Activated CD4-positive, alpha-beta memory T cell treated with anti-CD3 and anti-CD28 coated beads for 36 hours (primary cell): ENCODE measurements at regions of chr19 and their contacts with region 1.

Region 1: DNA sequence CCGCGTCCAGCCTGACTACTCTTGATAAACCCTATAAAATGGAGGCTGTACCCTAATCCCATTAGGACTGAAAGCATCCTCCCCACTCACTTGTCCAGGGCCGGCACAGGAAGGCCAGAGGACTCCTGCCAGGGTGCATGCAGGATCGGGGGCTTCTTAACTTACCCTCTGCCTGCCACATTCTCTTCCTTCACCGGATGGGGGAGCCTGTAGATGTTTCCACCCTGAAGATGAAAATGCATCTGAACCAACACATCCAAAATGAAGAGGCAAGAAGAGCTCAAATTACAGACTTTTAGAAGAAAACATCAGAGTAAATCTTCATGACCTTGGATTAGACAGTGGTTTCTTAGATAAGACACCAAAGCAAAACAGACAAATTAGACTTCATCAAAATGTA is 25.9 kb upstream of the NAPA start:
- DNase-seq: no peak
- H3K4me3 Mint-ChIP-seq: no peak overlapping the region
- H3K27ac Mint-ChIP-seq: peak overlapping the region; percentile 54
- H3K4me1 Mint-ChIP-seq: peaks cover 15% of the 10 kb centered on the region
- H3K27me3 Mint-ChIP-seq: peaks cover 5% of the 10 kb centered on the region

Region 2: DNA sequence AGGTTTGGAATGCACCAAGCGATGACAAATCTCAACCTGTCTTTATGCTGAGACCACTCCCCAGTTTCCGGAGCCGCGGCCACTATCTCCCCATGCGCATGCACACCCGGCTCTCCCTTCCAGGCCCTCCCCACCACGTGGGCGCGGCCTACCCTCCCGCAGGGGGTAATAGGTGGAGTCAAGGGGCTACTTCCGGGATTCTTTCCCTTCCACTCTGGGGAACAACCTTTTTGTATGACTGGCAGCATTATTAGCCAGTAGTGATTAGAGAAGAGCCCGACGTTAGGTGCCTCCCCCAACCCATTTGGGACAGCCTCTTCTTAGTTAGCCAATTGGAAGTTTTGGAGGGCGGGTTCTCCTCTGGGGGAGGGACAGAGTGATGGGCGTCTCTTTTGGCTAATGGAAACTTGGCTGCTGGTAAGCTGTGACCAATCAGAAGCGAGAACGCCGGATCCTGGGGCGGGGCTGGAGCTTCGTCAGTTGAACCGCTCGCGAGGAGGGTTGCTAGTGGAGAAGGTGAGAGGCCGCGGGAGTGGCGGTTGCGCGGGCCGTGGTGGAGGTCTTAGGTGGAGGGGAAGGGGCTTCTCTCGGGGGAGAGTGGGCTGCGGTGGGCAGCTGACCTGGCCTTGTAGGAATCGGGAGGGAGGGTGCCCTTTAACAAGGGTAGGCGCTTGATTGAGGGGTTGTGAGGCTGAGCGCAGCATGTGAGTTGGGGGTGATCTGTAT is 1545.6 kb before region 1 on chr19 and contains the start of gene CCDC61:
- CTCF ChIA-PET with region 1: no interaction called
- POLR2A ChIA-PET with region 1: no interaction called
- intact Hi-C with region 1: no loop called
- DNase-seq: peak; percentile 97
- H3K4me3 Mint-ChIP-seq: no peak within 1 kb of the TSS
- H3K27ac Mint-ChIP-seq: no peak within 1 kb of the TSS
- H3K4me1 Mint-ChIP-seq: peaks cover 17% of the 10 kb centered on the region
- H3K27me3 Mint-ChIP-seq: peaks cover 5% of the 10 kb centered on the region
- total RNA-seq, gene CCDC61: 28.4 to 30.5 TPM

Region 3: GRCh38 chr19:47561440-47562057 is 20.8 kb after region 1 on chr19:
- CTCF ChIA-PET with region 1: no interaction called
- POLR2A ChIA-PET with region 1: no interaction called
- intact Hi-C with region 1: no loop called
- DNase-seq: no peak
- H3K4me3 Mint-ChIP-seq: no peak overlapping the region
- H3K27ac Mint-ChIP-seq: no peak overlapping the region
- H3K4me1 Mint-ChIP-seq: no peaks in the 10 kb centered on the region
- H3K27me3 Mint-ChIP-seq: no peaks in the 10 kb centered on the region

Region 4: GRCh38 chr19:47600246-47601179 is 59.8 kb after region 1 on chr19:
- CTCF ChIA-PET with region 1: no interaction called
- POLR2A ChIA-PET with region 1: no interaction called
- intact Hi-C with region 1: loop called (anchors 1 kb)
- DNase-seq: peak; percentile 100
- H3K4me3 Mint-ChIP-seq: peak overlapping the region; percentile 83
- H3K27ac Mint-ChIP-seq: peak overlapping the region; percentile 86
- H3K4me1 Mint-ChIP-seq: peaks cover 30% of the 10 kb centered on the region
- H3K27me3 Mint-ChIP-seq: no peaks in the 10 kb centered on the region